PC-9 (cell line): ENCODE measurements at regions of chr16 and their contacts with region 1.

Region 1: DNA sequence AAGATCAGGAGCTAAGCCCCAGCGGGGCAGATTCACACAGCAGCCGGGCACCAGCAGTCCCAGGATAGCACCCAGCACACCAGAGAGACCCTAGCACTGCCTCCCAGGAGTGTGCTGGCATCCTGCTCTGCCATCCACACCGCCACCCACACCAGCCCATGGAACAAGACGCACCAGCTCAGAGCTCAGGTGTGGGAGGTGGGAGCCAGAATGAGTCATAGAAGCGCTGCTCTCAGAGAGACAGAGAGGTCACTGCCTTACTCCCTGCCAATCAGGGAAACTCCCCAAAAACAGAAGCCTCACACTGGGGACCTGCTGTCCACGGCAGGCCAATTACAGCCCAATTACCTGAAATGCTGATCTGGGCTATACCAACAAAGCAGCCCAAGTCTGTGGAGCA is 64.9 kb downstream of the CDYL2 start:
- DNase-seq: no peak
- H3K4me3 ChIP-seq: no peak overlapping the region
- H3K27ac ChIP-seq: no peak overlapping the region
- H3K4me1 ChIP-seq: no peaks in the 10 kb centered on the region
- H3K27me3 ChIP-seq: no peaks in the 10 kb centered on the region
- CTCF ChIP-seq: no peak

Region 2: DNA sequence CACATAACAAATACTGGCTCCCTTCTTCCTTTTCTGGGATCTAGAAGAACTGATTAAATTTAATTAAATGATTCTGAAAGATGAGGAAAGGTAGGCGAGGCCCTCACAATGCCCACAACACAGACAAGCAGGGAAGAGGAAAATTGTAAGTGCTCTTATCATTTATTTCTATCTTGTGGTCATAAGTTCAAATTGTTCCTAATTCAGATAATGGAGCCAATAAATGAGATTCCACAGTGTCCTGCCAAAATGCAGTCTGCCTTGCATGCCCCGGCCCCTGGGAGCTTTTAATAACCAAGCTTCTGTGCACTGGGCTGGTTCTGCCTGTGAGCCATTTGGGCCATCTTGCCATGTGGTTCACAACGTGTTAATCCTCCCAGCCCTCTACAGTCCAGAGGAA is 170.2 kb after region 1 on chr16:
- CTCF ChIA-PET with region 1: no interaction called
- POLR2A ChIA-PET with region 1: interaction called, 12 read pairs
- intact Hi-C with region 1: no loop called
- DNase-seq: no peak
- H3K4me3 ChIP-seq: no peak overlapping the region
- H3K27ac ChIP-seq: no peak overlapping the region
- H3K4me1 ChIP-seq: no peaks in the 10 kb centered on the region
- H3K27me3 ChIP-seq: peaks cover 85% of the 10 kb centered on the region
- CTCF ChIP-seq: no peak